Left colon (tissue), 2 donors: ENCODE measurements at regions of chr16 and their contacts with region 1.

Region 1: GRCh38 chr16:55543472-55543871 is 23.0 kb upstream of the CAPNS2 start:
- DNase-seq: no peak
- ATAC-seq: peak; percentile 38

Region 2: DNA sequence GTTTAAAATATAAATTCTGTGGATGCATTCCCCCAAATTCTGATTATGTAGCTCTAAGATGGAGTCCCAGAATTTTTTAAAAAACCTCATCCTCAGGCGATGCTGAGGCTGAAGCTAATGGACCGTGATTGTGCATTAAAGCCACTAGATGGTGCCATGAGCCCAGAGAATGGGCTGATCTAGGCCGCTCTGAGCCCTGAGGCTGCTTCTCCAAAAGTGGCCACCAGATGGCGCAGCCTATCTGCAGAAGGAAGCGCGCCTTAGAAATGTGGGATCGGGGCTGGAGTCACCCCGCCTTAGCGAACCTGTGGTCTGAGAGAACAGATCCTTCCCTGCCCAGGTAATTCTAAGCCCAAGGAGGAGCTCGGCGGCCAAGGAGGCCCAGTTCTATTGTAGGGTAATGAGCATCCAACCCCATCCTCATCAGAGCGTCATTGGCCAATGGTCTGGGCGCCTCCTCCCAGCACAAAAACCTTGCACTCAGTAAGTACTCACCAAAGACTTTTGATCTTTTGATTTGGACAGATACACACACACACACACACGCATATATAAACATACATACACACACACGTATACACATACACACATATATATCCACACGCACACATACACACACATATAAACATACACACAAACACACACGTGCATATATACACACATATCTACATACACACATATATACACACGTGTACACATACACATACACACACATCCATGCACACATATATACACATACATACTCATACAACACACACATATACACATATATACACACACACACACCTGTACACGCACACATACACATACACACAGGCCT is 78.2 kb before region 1 on chr16:
- intact Hi-C with region 1: loop called in 1 of 2 experiments (anchors 5 kb)
- DNase-seq: peak; percentile 71 to 93
- ATAC-seq: peak; percentile 97

Region 3: DNA sequence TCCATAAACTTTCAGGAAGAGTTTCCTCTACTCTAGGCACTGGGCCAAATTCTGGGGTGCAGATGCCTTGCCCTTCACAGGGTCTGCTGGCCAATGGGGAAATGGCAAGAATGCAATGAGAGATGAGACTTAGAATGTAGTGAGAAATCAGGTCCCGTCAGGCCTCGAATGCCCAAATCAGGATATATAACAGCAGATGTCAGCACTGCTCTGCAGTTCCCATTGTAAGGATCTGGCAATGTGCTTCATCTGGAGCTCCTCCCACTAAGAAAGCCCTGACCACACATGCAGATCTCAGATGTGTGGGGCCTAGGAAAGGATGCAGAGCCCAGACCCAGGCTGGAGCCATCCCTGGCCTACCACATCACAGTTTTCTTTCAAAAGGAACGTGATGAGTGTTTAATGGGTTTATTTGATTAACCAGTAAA is 48.5 kb before region 1 on chr16:
- intact Hi-C with region 1: loop called in 1 of 2 experiments (anchors 5 kb)
- DNase-seq: peak; percentile 35 to 40
- ATAC-seq: peak; percentile 97

Region 4: GRCh38 chr16:55735120-55735781 is 191.8 kb after region 1 on chr16:
- intact Hi-C with region 1: no loop called
- DNase-seq: no peak
- ATAC-seq: no peak